ENCODE measurements at regions of chr1 and their contacts with region 1.

Region 1: GRCh38 chr1:217889401-217889800 is 258.3 kb downstream of the SPATA17 start:
- DNase-seq: peak in 2 of 3 donors; percentile 71
- ATAC-seq: no peak
- H3K4me3 ChIP-seq: no peak overlapping the region
- H3K27ac ChIP-seq: no peak overlapping the region
- H3K4me1 ChIP-seq: no peaks in the 10 kb centered on the region
- H3K27me3 ChIP-seq: no peaks in the 10 kb centered on the region

Region 2: GRCh38 chr1:217687509-217687908 is 201.9 kb before region 1 on chr1:
- intact Hi-C with region 1: no loop called
- DNase-seq: no peak
- ATAC-seq: no peak
- H3K4me3 ChIP-seq: no peak overlapping the region
- H3K27ac ChIP-seq: no peak overlapping the region
- H3K4me1 ChIP-seq: no peaks in the 10 kb centered on the region
- H3K27me3 ChIP-seq: no peaks in the 10 kb centered on the region

Region 3: DNA sequence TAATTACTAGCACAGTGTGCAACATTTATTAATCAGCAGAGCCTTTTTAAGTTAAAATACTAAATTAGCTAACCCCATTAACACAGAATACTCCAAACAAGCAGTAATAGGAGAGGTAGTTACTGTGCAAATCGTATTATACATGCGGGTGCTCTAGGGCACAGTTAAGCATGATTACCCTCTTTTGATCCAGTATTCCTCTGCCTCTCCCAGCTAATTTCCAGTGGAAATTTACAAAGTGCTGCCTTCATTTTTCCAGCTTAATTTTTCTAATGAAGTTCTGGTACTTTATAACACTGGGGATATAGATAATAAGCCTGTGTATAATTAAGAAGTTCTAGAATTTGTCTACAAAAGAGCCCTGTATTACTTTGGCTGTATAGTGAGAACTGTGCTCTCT is 98.3 kb before region 1 on chr1:
- intact Hi-C with region 1: no loop called
- DNase-seq: no peak
- ATAC-seq: no peak
- H3K4me3 ChIP-seq: no peak overlapping the region
- H3K27ac ChIP-seq: no peak overlapping the region
- H3K4me1 ChIP-seq: no peaks in the 10 kb centered on the region
- H3K27me3 ChIP-seq: no peaks in the 10 kb centered on the region

Region 4: DNA sequence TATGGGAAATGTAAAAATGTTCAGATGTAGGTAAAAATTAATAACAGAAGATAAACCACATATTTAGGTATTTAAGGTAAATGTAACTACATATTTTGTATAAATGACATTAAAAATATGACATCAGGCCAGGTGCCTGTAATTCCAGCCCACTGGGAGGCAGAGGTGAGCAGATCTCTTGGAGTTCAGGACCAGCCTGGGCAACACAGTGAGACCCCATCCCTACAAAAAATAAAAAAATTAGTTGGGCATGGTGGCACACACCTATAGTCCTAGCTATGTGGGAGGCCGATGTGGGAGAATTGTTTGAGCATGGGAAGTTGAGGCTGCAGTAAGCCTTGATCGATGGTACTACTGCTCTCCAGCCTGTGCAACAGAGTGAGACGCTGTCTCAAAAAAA is 41.8 kb before region 1 on chr1:
- intact Hi-C with region 1: no loop called
- DNase-seq: no peak
- ATAC-seq: no peak
- H3K4me3 ChIP-seq: no peak overlapping the region
- H3K27ac ChIP-seq: no peak overlapping the region
- H3K4me1 ChIP-seq: no peaks in the 10 kb centered on the region
- H3K27me3 ChIP-seq: no peaks in the 10 kb centered on the region

Region 5: GRCh38 chr1:218171285-218171893 is 282.0 kb after region 1 on chr1:
- intact Hi-C with region 1: loop called in 1 of 4 experiments (anchors 5 kb)
- DNase-seq: no peak
- ATAC-seq: no peak
- H3K4me3 ChIP-seq: peak overlapping the region; percentile 32
- H3K27ac ChIP-seq: no peak overlapping the region
- H3K4me1 ChIP-seq: no peaks in the 10 kb centered on the region
- H3K27me3 ChIP-seq: no peaks in the 10 kb centered on the region

Measured in right cardiac atrium (tissue), 5 donors.